Common myeloid progenitor, CD34-positive (primary cell): ENCODE measurements at regions of chr3 and their contacts with region 1.

Region 1: DNA sequence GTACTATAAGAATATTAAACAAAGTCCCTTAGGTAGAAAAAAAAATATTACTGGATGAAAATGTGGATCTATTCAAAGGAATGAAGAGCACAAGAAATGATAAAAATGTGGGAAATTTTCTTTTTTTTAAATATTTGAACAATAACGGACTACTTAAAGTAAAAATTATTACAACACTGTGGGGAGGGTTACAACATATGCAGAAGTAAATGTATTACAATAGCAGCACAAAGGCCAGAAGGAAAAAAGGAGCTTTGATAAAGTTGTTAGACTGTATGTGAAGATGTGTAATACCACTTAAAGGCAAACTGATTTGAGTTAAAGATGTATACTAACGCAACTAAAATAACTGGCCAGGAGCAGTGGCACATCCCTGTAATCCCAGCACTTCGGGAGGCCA is 427.1 kb downstream of the SHQ1 start:
- DNase-seq: no peak
- H3K4me3 ChIP-seq: no peak overlapping the region
- H3K27ac ChIP-seq: no peak overlapping the region
- H3K4me1 ChIP-seq: peaks cover 6 to 18% (median 10%) of the 10 kb centered on the region in 4 experiments
- H3K27me3 ChIP-seq: no peaks in the 10 kb centered on the region

Region 2: DNA sequence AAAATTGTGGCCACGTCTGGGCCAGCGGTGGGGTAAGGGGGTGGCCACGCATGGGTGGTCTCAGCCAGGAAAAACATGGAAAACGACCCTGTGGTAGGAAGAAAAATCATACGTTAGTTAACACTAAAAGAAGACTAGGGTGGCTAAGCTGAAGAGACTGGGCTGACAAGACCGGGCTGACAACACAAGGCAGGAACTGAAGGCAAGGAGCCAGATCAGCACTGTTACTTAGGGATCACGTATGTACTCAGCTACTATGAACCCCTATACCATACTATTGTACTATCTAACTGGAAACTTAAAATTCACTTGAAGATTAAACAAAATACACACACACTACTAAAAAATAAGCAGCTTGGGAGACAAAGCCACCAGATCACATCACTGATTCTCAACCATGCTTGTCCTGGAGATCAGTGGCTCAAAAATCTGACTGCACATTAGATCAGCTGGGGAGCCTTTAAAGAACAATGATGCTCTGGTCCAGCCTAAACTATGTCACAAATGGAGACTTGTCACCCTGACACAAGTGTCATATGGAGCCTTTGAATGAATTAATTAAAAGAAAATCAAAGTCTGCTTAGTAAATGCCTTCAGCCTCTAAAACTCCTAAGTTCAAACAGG is 15.1 kb before region 1 on chr3:
- CTCF ChIA-PET with region 1: interaction called, 10 read pairs
- POLR2A ChIA-PET with region 1: interaction called, 3 read pairs
- DNase-seq: no peak
- H3K4me3 ChIP-seq: no peak overlapping the region
- H3K27ac ChIP-seq: no peak overlapping the region
- H3K4me1 ChIP-seq: peaks cover 13 to 66% (median 45%) of the 10 kb centered on the region in 4 experiments
- H3K27me3 ChIP-seq: no peaks in the 10 kb centered on the region

Region 3: GRCh38 chr3:72458358-72458757 is 37.2 kb after region 1 on chr3:
- CTCF ChIA-PET with region 1: no interaction called
- POLR2A ChIA-PET with region 1: no interaction called
- DNase-seq: no peak
- H3K4me3 ChIP-seq: no peak overlapping the region
- H3K27ac ChIP-seq: no peak overlapping the region
- H3K4me1 ChIP-seq: peaks cover 0 to 9% (median 7%) of the 10 kb centered on the region in 4 experiments
- H3K27me3 ChIP-seq: no peaks in the 10 kb centered on the region